HEK293 (cell line): ENCODE measurements at regions of chr1 and their contacts with region 1.

Region 1: GRCh38 chr1:23098463-23099170 is 70.0 kb downstream of the LUZP1 start:
- H3K4me3 ChIP-seq: no peak overlapping the region
- H3K27ac ChIP-seq: no peak overlapping the region
- H3K4me1 ChIP-seq: peaks cover 32% of the 10 kb centered on the region
- CTCF ChIP-seq: peak; percentile 77

Region 2: DNA sequence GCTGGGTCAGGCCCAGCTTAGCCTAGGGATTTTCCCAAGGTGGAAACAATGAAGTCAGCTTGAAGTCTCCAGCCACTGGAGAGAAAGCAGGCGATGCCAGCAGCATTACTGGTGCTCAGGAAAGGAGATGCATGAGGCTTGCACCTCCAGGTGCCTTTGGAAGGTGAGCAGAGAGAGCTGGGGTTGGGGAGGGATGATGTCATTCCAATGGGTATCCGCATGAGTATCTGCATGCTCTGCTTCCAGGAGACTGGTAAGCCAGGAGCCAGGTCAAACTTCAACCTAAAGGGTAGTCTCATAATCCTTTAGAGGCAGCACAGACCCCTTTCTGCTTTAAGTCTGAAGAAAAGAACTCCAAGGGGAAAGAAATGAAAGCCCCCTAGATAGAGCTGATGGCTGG is 10.6 kb before region 1 on chr1:
- CTCF ChIA-PET with region 1: interaction called, 16 read pairs
- POLR2A ChIA-PET with region 1: interaction called, 3 read pairs
- H3K4me3 ChIP-seq: no peak overlapping the region
- H3K27ac ChIP-seq: no peak overlapping the region
- H3K4me1 ChIP-seq: no peaks in the 10 kb centered on the region
- CTCF ChIP-seq: no peak

Region 3: GRCh38 chr1:23108918-23109533 is 10.4 kb after region 1 on chr1:
- CTCF ChIA-PET with region 1: interaction called, 27 read pairs
- POLR2A ChIA-PET with region 1: no interaction called
- H3K4me3 ChIP-seq: no peak overlapping the region
- H3K27ac ChIP-seq: no peak overlapping the region
- H3K4me1 ChIP-seq: no peaks in the 10 kb centered on the region
- CTCF ChIP-seq: no peak

Region 4: DNA sequence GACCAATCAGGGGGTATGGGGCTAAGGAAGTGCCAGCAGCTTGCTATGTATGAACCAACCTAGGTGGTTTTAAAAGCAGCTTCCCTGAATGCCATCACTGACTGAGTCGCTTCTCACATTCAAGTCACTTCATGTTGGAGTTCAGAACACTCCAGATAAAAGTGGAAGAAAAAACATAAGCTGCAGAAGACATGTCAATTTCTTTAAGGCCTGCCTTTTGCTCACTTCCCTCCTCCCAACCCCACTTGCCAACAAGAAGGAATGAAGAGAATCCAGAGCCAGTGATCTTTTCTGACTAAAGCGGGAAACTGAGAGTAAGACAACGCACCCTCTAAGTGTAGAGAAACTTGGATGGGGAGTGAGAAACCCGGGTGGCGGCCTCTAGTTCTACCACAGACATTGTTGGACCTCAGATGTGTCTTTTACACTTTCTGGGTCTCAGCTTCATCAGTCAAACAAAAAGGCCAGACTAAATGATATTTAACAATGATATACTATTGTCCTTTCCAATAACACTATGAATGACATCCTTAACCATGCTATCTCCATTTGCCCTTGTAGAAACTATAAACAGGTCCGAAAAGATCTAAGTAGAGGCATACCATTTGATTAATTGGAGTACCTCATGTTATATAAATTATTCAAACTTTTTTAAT is 15.9 kb after region 1 on chr1:
- CTCF ChIA-PET with region 1: interaction called, 27 read pairs
- POLR2A ChIA-PET with region 1: no interaction called
- H3K4me3 ChIP-seq: no peak overlapping the region
- H3K27ac ChIP-seq: no peak overlapping the region
- H3K4me1 ChIP-seq: peaks cover 4% of the 10 kb centered on the region; the same call in 1 of the 2 replicates
- CTCF ChIP-seq: no peak

Region 5: DNA sequence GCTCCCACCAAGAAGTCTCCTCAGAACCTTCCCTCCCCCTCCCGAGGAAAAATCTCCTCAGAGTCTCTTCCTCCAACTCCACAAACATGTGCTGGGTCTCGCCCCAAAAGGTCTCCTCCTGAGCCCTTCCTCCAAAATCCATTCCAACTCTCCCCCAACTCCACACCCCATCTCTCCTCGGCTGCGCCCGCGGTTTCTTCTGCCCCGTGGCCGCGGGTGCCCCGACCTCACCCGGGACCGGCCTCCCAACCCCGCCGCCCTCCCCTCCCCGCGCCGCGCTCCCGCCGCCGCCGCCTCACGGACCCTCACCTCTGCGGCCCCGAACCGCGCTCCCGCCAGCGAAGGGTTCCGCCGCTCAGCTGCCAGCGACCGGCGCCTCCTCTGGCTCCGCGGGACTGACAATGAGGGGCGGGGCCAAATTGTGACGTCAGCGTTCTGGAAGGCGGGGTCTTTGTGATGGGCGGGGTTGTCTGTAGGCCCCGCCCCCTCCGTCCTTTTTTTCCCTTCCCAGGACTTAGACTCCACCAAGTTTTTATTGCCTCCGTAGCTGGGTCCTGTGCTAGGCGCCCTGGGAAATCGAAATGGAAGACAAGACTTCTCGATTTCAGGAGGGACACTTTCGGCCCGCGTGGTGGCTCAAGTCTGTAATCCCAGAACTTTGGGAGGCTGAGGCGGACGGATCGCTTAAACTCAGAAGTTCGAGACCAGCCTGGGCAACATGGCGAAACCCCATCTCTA is 70.0 kb after region 1 on chr1 and contains the start of gene LUZP1:
- CTCF ChIA-PET with region 1: interaction called, 10 read pairs
- POLR2A ChIA-PET with region 1: interaction called, 6 read pairs
- H3K4me3 ChIP-seq: peak within 1 kb of the TSS; percentile 73
- H3K27ac ChIP-seq: peak within 1 kb of the TSS; percentile 76
- H3K4me1 ChIP-seq: peaks cover 14% of the 10 kb centered on the region
- CTCF ChIP-seq: 0 out of 2 replicates have a peak, but pooled peaks have one; percentile 13

Region 6: DNA sequence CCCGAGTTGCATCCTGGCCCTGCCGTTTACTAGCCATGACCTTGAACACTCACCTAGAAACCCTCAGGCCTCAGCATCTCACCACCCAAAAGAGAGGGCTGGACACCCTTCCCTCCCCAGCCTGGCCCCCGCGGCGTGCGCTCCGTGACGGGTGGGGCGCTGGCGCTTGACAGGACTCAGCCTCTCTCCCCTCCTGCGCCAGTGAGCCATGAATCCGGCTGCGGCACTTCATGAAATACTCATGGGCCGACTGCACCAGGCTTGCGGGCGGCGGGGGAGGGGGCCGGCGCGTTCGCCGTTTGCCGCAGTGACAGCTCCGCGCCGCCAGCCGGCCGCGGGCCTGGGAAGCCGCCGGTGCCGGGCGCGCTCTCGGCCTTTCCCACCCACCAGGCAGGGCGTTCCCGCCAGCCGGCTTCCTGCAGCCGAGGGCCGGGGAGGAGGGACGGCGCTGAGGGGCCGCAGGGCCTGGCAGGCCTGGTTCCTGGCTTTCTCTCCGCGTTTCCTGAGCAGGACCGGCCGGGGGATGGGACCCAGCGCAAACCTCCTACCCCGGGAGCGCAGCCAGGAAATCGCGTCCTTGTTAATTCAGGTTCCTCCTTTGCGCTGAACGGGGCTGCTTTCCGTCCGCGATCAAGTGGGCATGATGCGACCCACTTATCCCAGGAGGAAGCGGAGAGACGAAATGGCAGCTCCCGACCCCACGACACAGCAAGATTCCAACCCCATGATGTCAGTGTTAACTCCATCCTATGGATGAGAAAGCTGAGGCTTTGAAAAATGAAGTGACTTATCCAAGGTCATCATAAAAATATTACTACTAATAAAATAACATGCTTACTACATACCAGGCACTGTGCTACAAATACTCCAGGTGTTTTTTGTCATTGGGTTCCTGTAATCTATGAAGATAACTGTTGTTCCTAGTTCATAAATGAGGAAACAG is 79.1 kb after region 1 on chr1:
- CTCF ChIA-PET with region 1: interaction called, 333 read pairs
- POLR2A ChIA-PET with region 1: interaction called, 4 read pairs
- H3K4me3 ChIP-seq: peak overlapping the region; percentile 47
- H3K27ac ChIP-seq: peak overlapping the region; percentile 45
- H3K4me1 ChIP-seq: no peaks in the 10 kb centered on the region
- CTCF ChIP-seq: peak; percentile 8; the same call in 1 of the 2 replicates